ENCODE measurements at regions of chr19 and their contacts with region 1.

Region 1: GRCh38 chr19:40570313-40571004 is 6.2 kb upstream of the SHKBP1 start:
- DNase-seq: peak; percentile 97
- H3K4me3 Mint-ChIP-seq: peak overlapping the region; percentile 65
- H3K27ac Mint-ChIP-seq: peak overlapping the region; percentile 72
- H3K4me1 Mint-ChIP-seq: peaks cover 14% of the 10 kb centered on the region
- H3K27me3 Mint-ChIP-seq: peaks cover 38% of the 10 kb centered on the region

Region 2: DNA sequence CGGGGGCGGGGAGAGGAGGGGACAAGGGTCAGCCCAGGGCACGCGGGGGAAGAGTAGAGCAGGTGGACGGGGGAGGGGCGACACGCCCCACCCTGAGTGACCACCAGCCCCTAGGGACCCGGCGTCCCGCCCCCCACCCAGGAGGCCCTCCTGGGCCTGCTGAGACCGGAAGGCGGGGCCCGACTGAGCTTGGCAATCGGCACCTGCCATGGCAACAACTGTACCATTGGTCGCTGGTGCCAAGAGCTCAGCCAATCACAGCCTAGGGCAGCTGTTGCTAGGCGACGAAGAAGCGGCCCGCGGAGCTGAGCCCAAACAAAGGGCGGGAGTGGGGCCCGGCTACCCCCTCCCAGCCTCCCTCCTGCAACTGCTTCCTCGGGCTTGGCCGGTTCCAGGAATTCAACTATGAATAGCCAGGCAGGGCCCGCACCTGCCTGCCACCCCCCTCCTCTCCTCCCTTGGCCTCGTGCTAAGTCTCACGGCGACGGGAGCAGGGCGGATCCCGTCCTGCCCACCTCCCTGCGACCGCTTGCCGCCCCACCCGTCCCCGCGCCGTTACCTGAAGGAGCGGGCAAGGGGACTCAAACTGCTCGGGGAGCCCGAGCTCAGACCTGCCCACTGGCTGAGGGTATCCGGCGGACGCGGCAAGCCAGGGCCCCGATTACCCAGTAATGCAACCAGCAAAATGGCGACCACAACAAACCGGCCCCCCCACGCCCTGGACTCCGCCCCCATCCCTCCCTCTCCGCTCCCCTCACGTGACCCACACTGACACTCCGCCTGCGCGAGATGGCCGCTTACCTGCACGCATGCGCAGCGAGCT is 736.8 kb before region 1 on chr19 and contains the start of gene DYRK1B:
- intact Hi-C with region 1: no loop called
- DNase-seq: peak; percentile 95
- H3K4me3 Mint-ChIP-seq: peak within 1 kb of the TSS; percentile 69
- H3K27ac Mint-ChIP-seq: peak within 1 kb of the TSS; percentile 78
- H3K4me1 Mint-ChIP-seq: peaks cover 35% of the 10 kb centered on the region
- H3K27me3 Mint-ChIP-seq: no peaks in the 10 kb centered on the region
- total RNA-seq, gene DYRK1B: 4.2 and 5.5 TPM in 2 replicates

Region 3: GRCh38 chr19:40225440-40226305 is 344.8 kb before region 1 on chr19:
- intact Hi-C with region 1: no loop called
- DNase-seq: no peak
- H3K4me3 Mint-ChIP-seq: no peak overlapping the region
- H3K27ac Mint-ChIP-seq: no peak overlapping the region
- H3K4me1 Mint-ChIP-seq: peaks cover 13% of the 10 kb centered on the region
- H3K27me3 Mint-ChIP-seq: peaks cover 54% of the 10 kb centered on the region

Region 4: GRCh38 chr19:40403262-40403984 is 167.0 kb before region 1 on chr19:
- intact Hi-C with region 1: loop called (anchors 1 kb)
- DNase-seq: peak; percentile 80
- H3K4me3 Mint-ChIP-seq: peak overlapping the region; percentile 83
- H3K27ac Mint-ChIP-seq: peak overlapping the region; percentile 72
- H3K4me1 Mint-ChIP-seq: peaks cover 21% of the 10 kb centered on the region
- H3K27me3 Mint-ChIP-seq: peaks cover 7% of the 10 kb centered on the region

Region 5: GRCh38 chr19:40549007-40549708 is 21.3 kb before region 1 on chr19:
- intact Hi-C with region 1: loop called (anchors 2 kb)
- DNase-seq: peak; percentile 63
- H3K4me3 Mint-ChIP-seq: no peak overlapping the region
- H3K27ac Mint-ChIP-seq: no peak overlapping the region
- H3K4me1 Mint-ChIP-seq: peaks cover 4% of the 10 kb centered on the region
- H3K27me3 Mint-ChIP-seq: peaks cover 45% of the 10 kb centered on the region

Region 6: DNA sequence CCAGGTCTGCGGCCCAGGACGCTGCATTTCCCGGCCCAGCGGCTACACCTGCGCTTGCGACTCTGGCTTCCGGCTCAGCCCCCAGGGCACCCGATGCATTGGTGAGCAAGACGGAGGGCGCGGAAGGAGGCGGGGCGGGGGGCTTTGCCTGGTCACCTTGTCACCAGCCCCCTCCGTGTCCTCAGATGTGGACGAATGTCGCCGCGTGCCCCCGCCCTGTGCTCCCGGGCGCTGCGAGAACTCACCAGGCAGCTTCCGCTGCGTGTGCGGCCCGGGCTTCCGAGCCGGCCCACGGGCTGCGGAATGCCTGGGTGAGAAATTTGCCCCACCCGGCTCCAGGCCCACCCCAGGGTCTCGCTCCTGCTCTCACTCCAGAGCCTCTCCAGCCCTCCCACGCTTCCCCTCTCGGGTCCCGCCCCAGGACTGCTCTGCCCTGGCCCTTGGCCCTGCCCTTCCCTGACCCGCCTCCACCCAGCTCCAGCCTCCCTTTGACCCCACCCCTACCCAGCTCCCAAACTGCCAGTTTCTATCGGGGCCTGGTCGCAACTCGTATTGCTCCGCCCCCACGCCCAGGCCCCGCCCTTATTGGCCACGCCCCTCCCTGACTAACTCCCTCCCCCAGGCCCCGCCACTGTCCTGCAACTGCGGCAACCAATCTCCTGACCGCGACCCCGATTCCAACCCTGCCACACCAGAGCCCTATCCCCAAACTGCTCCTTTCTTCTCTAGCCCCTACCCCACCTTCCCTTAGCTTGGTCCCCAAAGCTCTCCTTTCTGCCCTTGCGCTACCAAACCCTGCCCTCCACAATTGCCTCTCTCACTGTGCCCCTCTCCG is 39.3 kb after region 1 on chr19:
- intact Hi-C with region 1: loop called (anchors 1 kb)
- DNase-seq: peak; percentile 86
- H3K4me3 Mint-ChIP-seq: peak overlapping the region; percentile 81
- H3K27ac Mint-ChIP-seq: peak overlapping the region; percentile 86
- H3K4me1 Mint-ChIP-seq: peaks cover 44% of the 10 kb centered on the region
- H3K27me3 Mint-ChIP-seq: no peaks in the 10 kb centered on the region

Region 7: GRCh38 chr19:40640744-40641143 is 70.3 kb after region 1 on chr19:
- intact Hi-C with region 1: loop called (anchors 2 kb)
- DNase-seq: no peak
- H3K4me3 Mint-ChIP-seq: no peak overlapping the region
- H3K27ac Mint-ChIP-seq: no peak overlapping the region
- H3K4me1 Mint-ChIP-seq: peaks cover 2% of the 10 kb centered on the region
- H3K27me3 Mint-ChIP-seq: peaks cover under 1% of the 10 kb centered on the region